Caco-2 (cell line): ENCODE measurements at regions of chr4 and their contacts with region 1.

Region 1: GRCh38 chr4:16225863-16226815 is at the start of gene TAPT1:
- DNase-seq: peak; percentile 77 to 86
- H3K4me3 ChIP-seq: peak within 1 kb of the TSS; percentile 86
- H3K4me3 Mint-ChIP-seq: peak within 1 kb of the TSS; percentile 83
- H3K27ac Mint-ChIP-seq: peak within 1 kb of the TSS; percentile 86
- H3K4me1 ChIP-seq: peaks cover 27% of the 10 kb centered on the region
- H3K4me1 Mint-ChIP-seq: peaks cover 27% of the 10 kb centered on the region
- H3K27me3 ChIP-seq: no peaks in the 10 kb centered on the region
- H3K27me3 Mint-ChIP-seq: no peaks in the 10 kb centered on the region
- CTCF ChIP-seq: no peak
- total RNA-seq, gene TAPT1: 23.7 and 24.9 TPM in 2 replicates

Region 2: DNA sequence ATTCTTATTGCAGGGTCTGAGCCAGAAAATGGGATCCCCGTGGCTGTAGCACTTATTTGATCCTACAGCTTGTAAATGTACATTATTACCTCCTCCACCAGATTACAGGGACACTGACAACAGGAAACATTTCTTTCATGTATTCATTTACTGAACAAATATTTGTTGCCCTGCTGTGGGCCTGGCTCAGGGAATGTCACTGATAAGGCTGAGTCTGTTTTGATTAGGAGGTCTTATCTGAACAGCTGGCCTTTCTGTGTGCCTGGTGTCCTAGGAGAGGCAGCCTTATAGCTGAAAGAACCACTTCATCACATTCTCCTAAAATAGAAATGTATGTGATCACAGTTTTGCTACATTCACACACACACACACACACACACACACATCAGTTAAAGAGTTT is 96.8 kb before region 1 on chr4:
- CTCF ChIA-PET with region 1: no interaction called
- POLR2A ChIA-PET with region 1: no interaction called
- intact Hi-C with region 1: no loop called
- DNase-seq: peak; percentile 77 to 80
- H3K4me3 ChIP-seq: no peak overlapping the region
- H3K4me3 Mint-ChIP-seq: no peak overlapping the region
- H3K27ac Mint-ChIP-seq: no peak overlapping the region
- H3K4me1 ChIP-seq: peaks cover 27% of the 10 kb centered on the region
- H3K4me1 Mint-ChIP-seq: peaks cover 38% of the 10 kb centered on the region
- H3K27me3 ChIP-seq: no peaks in the 10 kb centered on the region
- H3K27me3 Mint-ChIP-seq: no peaks in the 10 kb centered on the region
- CTCF ChIP-seq: no peak

Region 3: DNA sequence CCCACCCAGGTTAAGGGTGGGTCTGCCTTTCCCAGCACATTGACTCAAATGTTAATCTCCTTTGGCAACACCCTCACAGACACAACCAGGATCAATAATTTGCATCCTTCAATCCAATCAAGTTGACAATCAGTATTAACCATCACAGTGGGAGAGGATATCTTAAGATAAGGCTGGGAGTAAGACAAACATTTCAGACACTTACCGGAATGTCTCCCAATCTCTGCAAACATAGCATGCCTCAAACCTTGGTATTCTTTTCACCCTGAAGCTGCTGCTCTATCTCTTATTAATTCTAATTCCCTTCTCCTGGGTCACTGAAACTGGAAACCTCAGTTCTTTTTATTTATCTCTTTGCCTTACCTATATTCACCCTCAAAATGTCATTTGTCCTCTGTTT is 19.1 kb after region 1 on chr4:
- CTCF ChIA-PET with region 1: no interaction called
- POLR2A ChIA-PET with region 1: interaction called, 5 read pairs
- intact Hi-C with region 1: loop called (anchors 1 kb)
- DNase-seq: no peak
- H3K4me3 ChIP-seq: no peak overlapping the region
- H3K4me3 Mint-ChIP-seq: no peak overlapping the region
- H3K27ac Mint-ChIP-seq: peak overlapping the region; percentile 72
- H3K4me1 ChIP-seq: peaks cover 40% of the 10 kb centered on the region
- H3K4me1 Mint-ChIP-seq: peaks cover 42% of the 10 kb centered on the region
- H3K27me3 ChIP-seq: no peaks in the 10 kb centered on the region
- H3K27me3 Mint-ChIP-seq: no peaks in the 10 kb centered on the region
- CTCF ChIP-seq: no peak

Region 4: DNA sequence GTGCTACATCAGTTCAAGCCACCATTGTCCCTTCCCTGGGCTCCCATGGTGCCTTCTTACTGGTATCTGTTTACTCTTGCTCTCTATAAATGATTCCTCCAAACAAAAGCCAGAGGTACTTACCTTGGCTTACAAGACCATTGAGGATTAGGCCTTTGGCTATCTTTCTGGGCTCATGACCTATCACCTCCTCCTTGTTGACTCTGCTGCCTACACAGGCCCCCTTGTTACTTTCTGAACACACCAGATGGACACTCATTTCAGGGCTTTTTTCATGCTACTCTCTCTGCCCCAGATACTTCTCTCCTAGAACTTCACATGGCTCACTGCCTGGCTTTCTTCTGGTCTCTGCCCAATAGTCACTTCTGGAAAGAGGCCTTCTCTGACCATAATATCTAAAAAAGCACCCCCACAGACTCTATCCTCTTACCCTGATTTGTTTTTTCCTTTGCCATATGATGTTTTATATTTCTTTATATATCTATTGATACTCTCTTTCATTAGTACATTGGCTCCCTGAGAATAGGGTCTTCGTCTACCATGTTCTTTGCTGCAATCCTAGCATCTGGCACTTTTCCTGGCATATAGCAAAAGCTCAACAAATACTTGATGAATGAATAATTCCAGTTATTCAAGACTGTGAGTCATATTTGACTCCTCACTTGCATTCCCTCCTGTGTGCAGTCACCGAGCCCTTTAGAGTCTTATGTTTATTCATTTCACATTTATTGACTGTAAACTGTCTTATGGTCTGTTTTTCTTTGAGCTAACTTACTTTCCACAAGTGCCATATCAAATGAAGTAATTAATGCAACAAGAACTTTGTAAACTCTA is 27.2 kb after region 1 on chr4:
- CTCF ChIA-PET with region 1: no interaction called
- POLR2A ChIA-PET with region 1: interaction called, 5 read pairs
- intact Hi-C with region 1: loop called (anchors 1 kb)
- DNase-seq: no peak
- H3K4me3 ChIP-seq: no peak overlapping the region
- H3K4me3 Mint-ChIP-seq: no peak overlapping the region
- H3K27ac Mint-ChIP-seq: peak overlapping the region; percentile 39
- H3K4me1 ChIP-seq: peaks cover 34% of the 10 kb centered on the region
- H3K4me1 Mint-ChIP-seq: peaks cover 43% of the 10 kb centered on the region
- H3K27me3 ChIP-seq: no peaks in the 10 kb centered on the region
- H3K27me3 Mint-ChIP-seq: no peaks in the 10 kb centered on the region
- CTCF ChIP-seq: no peak

Region 5: GRCh38 chr4:16642895-16643294 is 416.8 kb after region 1 on chr4:
- CTCF ChIA-PET with region 1: no interaction called
- POLR2A ChIA-PET with region 1: no interaction called
- intact Hi-C with region 1: no loop called
- DNase-seq: peak in 1 of 2 experiments; percentile 6
- H3K4me3 ChIP-seq: no peak overlapping the region
- H3K4me3 Mint-ChIP-seq: no peak overlapping the region
- H3K27ac Mint-ChIP-seq: no peak overlapping the region
- H3K4me1 ChIP-seq: no peaks in the 10 kb centered on the region
- H3K4me1 Mint-ChIP-seq: no peaks in the 10 kb centered on the region
- H3K27me3 ChIP-seq: no peaks in the 10 kb centered on the region; the same call in 1 of the 2 replicates
- H3K27me3 Mint-ChIP-seq: peaks cover 7% of the 10 kb centered on the region
- CTCF ChIP-seq: peak; percentile 10 to 20